ENCODE measurements at regions of chr5 and their contacts with region 1.

Region 1: GRCh38 chr5:119322948-119323537 is 32.8 kb upstream of the TNFAIP8 start:
- DNase-seq: no peak
- H3K4me3 ChIP-seq: no peak overlapping the region
- H3K4me3 Mint-ChIP-seq: peak overlapping the region in 7 of 8 donors; percentile 62 to 90 (median 78)
- H3K27ac ChIP-seq: peak overlapping the region; percentile 59
- H3K27ac Mint-ChIP-seq: peak overlapping the region; percentile 83 to 99 (median 91)
- H3K4me1 ChIP-seq: peaks cover 96% of the 10 kb centered on the region
- H3K4me1 Mint-ChIP-seq: peaks cover 77 to 96% (median 86%) of the 10 kb centered on the region in 4 donors
- H3K27me3 ChIP-seq: no peaks in the 10 kb centered on the region
- H3K27me3 Mint-ChIP-seq: no peaks in the 10 kb centered on the region

Region 2: DNA sequence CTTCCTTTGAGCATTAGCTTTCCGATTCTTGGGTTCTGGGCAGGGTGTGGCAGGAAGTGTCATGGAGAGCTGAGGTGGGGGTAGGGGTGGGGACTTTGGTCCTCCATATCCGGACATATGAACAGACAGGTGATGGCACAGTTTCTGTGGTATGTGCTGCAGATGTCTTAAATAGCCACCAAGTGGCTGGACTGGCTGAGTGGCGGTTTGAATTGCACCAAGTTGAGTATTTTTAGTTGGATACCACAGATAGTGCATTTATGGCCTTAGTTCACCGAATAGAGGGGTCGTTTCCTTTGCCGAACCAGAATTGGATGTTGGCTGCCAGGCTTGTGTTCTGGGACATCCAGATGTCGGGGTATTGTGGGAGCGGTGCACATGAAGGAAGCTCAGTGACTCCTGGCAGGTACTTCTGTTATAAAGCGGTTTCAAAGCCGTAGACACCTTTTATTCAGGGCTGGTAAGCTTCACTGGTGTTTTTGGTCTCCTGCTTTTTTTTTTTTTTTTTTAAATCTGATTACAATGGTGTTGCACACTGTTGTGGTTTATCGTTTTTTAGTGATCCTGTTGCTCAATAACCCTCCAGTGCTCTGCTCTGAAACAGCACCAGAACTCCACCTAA is 17.7 kb after region 1 on chr5:
- CTCF ChIA-PET with region 1: interaction called, 52 read pairs
- POLR2A ChIA-PET with region 1: interaction called, 564 read pairs
- intact Hi-C with region 1: loop called (anchors 1 kb)
- DNase-seq: peak; percentile 71 to 85 (median 77)
- H3K4me3 ChIP-seq: peak overlapping the region; percentile 40 to 63
- H3K4me3 Mint-ChIP-seq: peak overlapping the region; percentile 80 to 89 (median 86)
- H3K27ac ChIP-seq: peak overlapping the region; percentile 75
- H3K27ac Mint-ChIP-seq: peak overlapping the region; percentile 89 to 97 (median 92)
- H3K4me1 ChIP-seq: peaks cover 99% of the 10 kb centered on the region
- H3K4me1 Mint-ChIP-seq: peaks cover 81 to 97% (median 89%) of the 10 kb centered on the region in 4 donors
- H3K27me3 ChIP-seq: no peaks in the 10 kb centered on the region
- H3K27me3 Mint-ChIP-seq: no peaks in the 10 kb centered on the region

Region 3: DNA sequence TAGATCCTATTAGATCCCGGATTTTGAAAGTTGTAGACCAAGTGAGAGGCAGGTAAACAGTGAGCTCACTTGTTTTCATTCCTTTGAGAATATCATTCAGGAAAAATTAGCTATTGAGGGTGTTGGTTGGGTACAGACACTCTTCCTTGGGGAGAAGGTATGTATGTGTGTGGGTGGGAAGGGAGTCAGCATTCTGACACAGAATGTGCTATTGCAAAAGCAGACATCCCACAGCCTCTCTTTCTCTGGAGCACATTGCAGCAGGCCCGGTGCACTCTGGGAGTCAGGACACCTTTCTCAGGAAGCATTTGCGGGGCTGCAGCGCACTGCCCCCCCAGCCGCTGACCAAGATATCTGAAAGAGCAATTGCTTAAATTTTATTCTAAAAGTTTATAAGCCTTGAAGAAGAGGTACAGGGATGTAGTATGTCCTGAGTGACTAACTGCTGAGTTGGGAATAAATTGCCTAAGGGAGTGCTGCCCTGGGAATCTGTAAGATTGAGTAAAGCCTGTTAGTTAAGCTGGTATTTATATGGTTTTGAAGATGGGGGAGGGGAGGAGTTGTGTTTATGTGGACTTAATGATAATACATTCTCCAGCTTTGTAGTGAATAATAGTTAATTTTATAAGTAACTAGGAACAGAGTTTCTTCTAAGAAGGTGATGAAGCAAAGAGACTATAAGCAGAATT is 38.0 kb after region 1 on chr5:
- CTCF ChIA-PET with region 1: interaction called, 3 read pairs
- POLR2A ChIA-PET with region 1: interaction called, 727 read pairs
- intact Hi-C with region 1: loop called (anchors 1 kb)
- DNase-seq: no peak
- H3K4me3 ChIP-seq: no peak overlapping the region
- H3K4me3 Mint-ChIP-seq: peak overlapping the region in 7 of 8 donors; percentile 43 to 92 (median 47)
- H3K27ac ChIP-seq: peak overlapping the region; percentile 11
- H3K27ac Mint-ChIP-seq: peak overlapping the region; percentile 86 to 97 (median 93)
- H3K4me1 ChIP-seq: peaks cover 98% of the 10 kb centered on the region
- H3K4me1 Mint-ChIP-seq: peaks cover 86 to 98% (median 93%) of the 10 kb centered on the region in 4 donors
- H3K27me3 ChIP-seq: no peaks in the 10 kb centered on the region
- H3K27me3 Mint-ChIP-seq: no peaks in the 10 kb centered on the region

Region 4: GRCh38 chr5:119537704-119538103 is 214.7 kb after region 1 on chr5:
- CTCF ChIA-PET with region 1: no interaction called
- POLR2A ChIA-PET with region 1: no interaction called
- intact Hi-C with region 1: no loop called
- DNase-seq: no peak
- H3K4me3 ChIP-seq: no peak overlapping the region
- H3K4me3 Mint-ChIP-seq: no peak overlapping the region
- H3K27ac ChIP-seq: no peak overlapping the region
- H3K27ac Mint-ChIP-seq: peak overlapping the region in 1 of 7 donors; percentile 2
- H3K4me1 ChIP-seq: no peaks in the 10 kb centered on the region
- H3K4me1 Mint-ChIP-seq: peaks cover 0 to 2% (median 0%) of the 10 kb centered on the region in 4 donors
- H3K27me3 ChIP-seq: no peaks in the 10 kb centered on the region
- H3K27me3 Mint-ChIP-seq: no peaks in the 10 kb centered on the region